Activated CD4-positive, alpha-beta T cell treated with anti-CD3 and anti-CD28 coated beads for 36 hours (primary cell): ENCODE measurements at regions of chr13 and their contacts with region 1.

Region 1: DNA sequence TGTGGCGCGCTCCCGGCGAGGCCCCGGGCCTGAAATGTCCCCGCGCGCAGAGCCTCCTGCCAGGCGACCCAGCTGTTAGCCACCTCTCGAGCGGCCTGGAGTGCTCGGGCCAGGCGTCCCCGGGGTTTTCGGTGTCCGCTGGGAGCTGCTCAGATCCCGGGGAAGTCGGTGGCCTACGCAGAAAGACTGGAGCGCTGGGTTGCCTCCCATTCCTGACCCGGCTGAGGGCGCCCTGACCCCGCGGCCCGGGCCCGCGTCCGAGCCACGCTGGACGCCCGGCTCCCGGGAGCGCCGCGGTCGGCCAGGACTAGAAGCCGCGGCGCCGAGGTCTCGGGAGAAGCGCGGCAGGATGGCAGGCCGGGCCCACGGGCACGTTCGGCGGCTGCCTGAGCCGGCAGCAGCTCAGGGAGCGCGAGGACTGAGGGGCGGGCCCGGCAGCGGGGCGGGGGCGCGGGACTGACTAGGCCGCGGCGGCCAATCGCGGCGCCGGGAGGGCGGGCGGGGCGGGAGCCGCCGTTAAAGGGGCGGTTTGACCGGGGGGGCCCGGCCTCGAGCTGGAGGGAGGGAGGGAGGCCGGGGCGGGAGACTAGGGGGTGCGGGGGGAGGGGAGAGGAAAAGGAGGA is 1.3 kb upstream of the ZIC2 start:
- DNase-seq: peak; percentile 80
- ATAC-seq: peak; percentile 82
- H3K4me3 Mint-ChIP-seq: peak overlapping the region; percentile 30
- H3K27ac Mint-ChIP-seq: no peak overlapping the region
- H3K4me1 Mint-ChIP-seq: peaks cover 25% of the 10 kb centered on the region
- H3K27me3 Mint-ChIP-seq: peaks cover 60% of the 10 kb centered on the region

Region 2: DNA sequence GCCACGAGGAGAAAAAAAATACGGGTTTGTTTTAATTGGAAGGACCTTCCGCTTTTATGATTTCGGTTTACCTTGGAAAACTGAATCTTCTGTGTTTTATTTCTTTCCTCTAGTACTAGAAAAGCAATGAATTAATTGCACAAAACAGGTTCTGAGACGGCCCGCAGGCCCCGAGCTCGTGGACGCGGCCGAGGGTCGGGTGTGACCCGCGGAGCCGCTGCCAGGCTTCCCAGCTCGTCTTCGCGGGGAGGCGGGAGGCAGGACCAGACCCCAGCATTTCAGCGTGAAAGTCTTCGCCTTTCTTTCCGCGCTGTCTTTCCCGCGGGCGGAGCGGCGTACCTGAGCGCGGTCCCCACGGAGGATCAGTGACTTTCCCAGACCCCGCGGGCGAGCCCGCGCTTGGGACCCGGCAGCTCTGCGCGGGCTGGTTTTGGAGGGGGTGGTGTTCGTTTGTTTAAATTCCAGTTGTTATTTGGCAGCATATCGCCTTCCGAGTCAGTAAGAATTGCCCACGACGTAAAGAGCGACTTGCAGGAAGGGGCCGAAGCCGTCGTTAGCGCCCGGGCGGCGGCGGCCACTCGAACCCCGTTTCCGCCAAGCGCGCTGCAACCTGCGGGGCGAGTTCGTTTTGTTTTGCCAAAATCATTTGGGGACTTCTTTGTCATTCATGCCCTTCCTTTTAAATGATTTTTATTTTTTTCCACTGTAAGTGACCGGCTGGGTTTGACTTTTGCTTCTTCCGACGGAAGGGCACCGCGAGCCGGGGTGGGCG is 84.9 kb before region 1 on chr13:
- CTCF ChIA-PET with region 1: no interaction called
- POLR2A ChIA-PET with region 1: no interaction called
- intact Hi-C with region 1: loop called in 1 of 2 experiments (anchors 10 kb)
- DNase-seq: peak; percentile 24
- ATAC-seq: no peak
- H3K4me3 Mint-ChIP-seq: peak overlapping the region; percentile 60
- H3K27ac Mint-ChIP-seq: no peak overlapping the region
- H3K4me1 Mint-ChIP-seq: peaks cover 9% of the 10 kb centered on the region
- H3K27me3 Mint-ChIP-seq: peaks cover 45% of the 10 kb centered on the region

Region 3: DNA sequence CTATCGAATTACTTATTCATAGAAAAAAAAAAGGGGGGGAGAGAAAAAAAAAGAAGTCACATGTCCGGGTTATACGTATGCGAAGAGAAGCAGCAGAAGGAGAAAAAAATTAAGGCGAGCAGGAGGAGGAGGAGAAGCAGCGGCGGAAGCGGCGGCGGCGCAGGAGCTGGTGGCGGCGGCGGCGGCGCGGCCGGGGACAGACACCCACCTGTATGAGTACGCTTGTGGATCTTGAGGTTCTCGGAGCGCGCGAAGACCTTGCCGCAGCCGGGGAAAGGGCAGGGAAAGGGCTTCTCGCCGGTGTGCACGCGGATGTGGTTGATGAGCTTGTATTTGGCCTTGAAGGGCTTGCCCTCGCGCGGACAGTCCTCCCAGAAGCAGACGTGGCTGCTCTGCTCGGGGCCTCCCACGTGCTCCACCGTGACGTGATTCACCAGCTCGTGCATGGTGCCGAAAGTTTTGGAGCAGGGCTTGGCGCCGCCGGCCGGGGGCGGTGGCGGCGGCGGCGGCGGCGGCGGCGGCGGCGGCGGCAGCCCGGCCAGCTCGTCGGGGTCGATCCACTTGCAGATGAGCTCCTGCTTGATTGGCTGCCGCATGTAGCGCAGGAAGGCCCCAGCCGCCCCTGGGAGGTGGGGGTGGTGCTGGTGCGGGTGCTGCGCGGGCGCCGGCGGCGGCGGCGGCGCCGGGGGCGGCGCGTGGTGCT is 10.2 kb before region 1 on chr13:
- CTCF ChIA-PET with region 1: interaction called, 3 read pairs
- POLR2A ChIA-PET with region 1: interaction called, 4 read pairs
- intact Hi-C with region 1: loop called (anchors 1 to 2 kb)
- DNase-seq: peak; percentile 63
- ATAC-seq: peak; percentile 54
- H3K4me3 Mint-ChIP-seq: peak overlapping the region; percentile 72
- H3K27ac Mint-ChIP-seq: no peak overlapping the region
- H3K4me1 Mint-ChIP-seq: peaks cover 17% of the 10 kb centered on the region
- H3K27me3 Mint-ChIP-seq: peaks cover 64% of the 10 kb centered on the region

Region 4: DNA sequence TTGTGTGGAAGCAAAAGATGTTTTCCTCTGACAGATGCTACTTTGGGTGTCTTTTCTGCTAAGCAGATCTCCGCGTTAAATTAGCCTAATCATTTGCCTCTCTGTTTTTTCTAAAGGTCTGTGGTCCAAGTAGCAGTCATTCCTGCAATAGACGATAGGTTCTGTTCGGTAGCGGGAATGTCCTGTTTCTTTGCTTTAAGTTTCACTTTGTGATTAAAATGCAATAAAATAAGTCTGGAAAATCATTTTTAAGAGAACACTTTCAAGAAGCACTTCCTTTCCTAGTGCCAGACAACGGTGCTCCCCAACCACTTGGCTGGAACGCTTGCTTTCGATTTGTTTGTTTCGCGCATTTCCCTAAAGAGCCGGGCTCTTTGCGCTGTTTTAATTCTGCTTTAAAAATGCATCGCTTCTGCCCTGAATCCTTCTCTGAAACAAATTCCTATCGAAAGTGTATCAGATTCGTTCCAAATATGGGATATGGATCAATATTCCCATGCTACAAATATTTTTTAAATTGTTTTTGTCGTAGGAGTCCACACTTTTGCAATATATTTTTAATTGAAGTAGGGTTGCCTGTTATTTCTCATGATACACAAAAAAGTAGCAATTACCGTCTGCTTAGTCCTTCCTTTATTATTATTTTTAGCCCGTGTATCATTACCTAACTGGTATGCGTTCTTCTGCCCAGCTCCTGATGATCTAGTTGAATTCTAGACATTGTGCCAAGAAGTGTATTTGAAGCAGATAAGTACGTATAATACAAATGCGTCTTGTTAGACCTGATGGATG is 15.5 kb after region 1 on chr13:
- CTCF ChIA-PET with region 1: interaction called, 4 read pairs
- POLR2A ChIA-PET with region 1: no interaction called
- intact Hi-C with region 1: loop called (anchors 1 to 2 kb)
- DNase-seq: peak; percentile 7
- ATAC-seq: no peak
- H3K4me3 Mint-ChIP-seq: no peak overlapping the region
- H3K27ac Mint-ChIP-seq: no peak overlapping the region
- H3K4me1 Mint-ChIP-seq: peaks cover 14% of the 10 kb centered on the region
- H3K27me3 Mint-ChIP-seq: peaks cover 74% of the 10 kb centered on the region

Region 5: DNA sequence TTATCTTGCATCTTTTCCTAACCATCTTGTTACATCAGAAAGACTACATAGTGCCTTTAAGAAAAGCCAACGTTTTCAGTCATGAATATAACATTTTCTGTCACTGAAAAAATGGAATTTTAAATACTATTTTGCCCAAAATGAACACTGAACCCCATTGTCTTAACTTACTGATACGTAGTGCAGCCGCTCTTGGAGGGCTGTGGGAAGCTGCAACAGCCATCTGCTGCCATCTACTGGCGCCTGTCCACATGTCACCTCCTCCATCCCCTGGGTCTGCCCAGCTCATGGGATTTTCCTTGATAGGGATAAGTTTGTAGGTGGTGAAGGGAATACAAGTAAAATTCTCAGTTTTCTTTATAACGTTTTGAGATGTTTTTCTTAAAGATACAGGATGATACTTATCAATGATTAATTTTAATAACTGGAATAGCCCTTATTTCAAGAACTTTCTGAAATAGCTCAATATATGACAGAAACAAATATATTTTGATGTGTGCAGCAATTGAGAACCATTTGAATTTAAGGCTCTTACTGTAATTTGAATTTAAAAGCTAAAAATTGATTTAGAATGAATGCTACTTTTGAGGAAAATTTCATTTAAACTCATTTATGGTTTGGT is 534.6 kb after region 1 on chr13:
- CTCF ChIA-PET with region 1: interaction called, 3 read pairs
- POLR2A ChIA-PET with region 1: no interaction called
- intact Hi-C with region 1: loop called in 1 of 2 experiments (anchors 10 kb)
- DNase-seq: peak; percentile 86
- ATAC-seq: peak; percentile 94
- H3K4me3 Mint-ChIP-seq: no peak overlapping the region
- H3K27ac Mint-ChIP-seq: no peak overlapping the region
- H3K4me1 Mint-ChIP-seq: peaks cover 10% of the 10 kb centered on the region
- H3K27me3 Mint-ChIP-seq: peaks cover 2% of the 10 kb centered on the region